ENCODE measurements at regions of chr5 and their contacts with region 1.

Region 1: GRCh38 chr5:52771343-52772039 is 16.2 kb upstream of the ITGA1 start:
- DNase-seq: peak; percentile 85
- H3K4me3 Mint-ChIP-seq: peak overlapping the region; percentile 62
- H3K27ac Mint-ChIP-seq: peak overlapping the region; percentile 71
- H3K4me1 Mint-ChIP-seq: peaks cover 54% of the 10 kb centered on the region
- H3K27me3 Mint-ChIP-seq: no peaks in the 10 kb centered on the region

Region 2: GRCh38 chr5:52725065-52725746 is 46.3 kb before region 1 on chr5:
- intact Hi-C with region 1: loop called (anchors 1 kb)
- DNase-seq: peak; percentile 93
- H3K4me3 Mint-ChIP-seq: peak overlapping the region; percentile 69
- H3K27ac Mint-ChIP-seq: peak overlapping the region; percentile 90
- H3K4me1 Mint-ChIP-seq: peaks cover 50% of the 10 kb centered on the region
- H3K27me3 Mint-ChIP-seq: no peaks in the 10 kb centered on the region

Region 3: GRCh38 chr5:52743970-52744369 is 27.5 kb before region 1 on chr5:
- intact Hi-C with region 1: loop called (anchors 1 kb)
- DNase-seq: peak; percentile 89
- H3K4me3 Mint-ChIP-seq: peak overlapping the region; percentile 31
- H3K27ac Mint-ChIP-seq: peak overlapping the region; percentile 76
- H3K4me1 Mint-ChIP-seq: peaks cover 49% of the 10 kb centered on the region
- H3K27me3 Mint-ChIP-seq: no peaks in the 10 kb centered on the region

Region 4: GRCh38 chr5:52760695-52761366 is 10.7 kb before region 1 on chr5:
- intact Hi-C with region 1: loop called (anchors 1 kb)
- DNase-seq: no peak
- H3K4me3 Mint-ChIP-seq: no peak overlapping the region
- H3K27ac Mint-ChIP-seq: no peak overlapping the region
- H3K4me1 Mint-ChIP-seq: peaks cover 12% of the 10 kb centered on the region
- H3K27me3 Mint-ChIP-seq: no peaks in the 10 kb centered on the region

Region 5: DNA sequence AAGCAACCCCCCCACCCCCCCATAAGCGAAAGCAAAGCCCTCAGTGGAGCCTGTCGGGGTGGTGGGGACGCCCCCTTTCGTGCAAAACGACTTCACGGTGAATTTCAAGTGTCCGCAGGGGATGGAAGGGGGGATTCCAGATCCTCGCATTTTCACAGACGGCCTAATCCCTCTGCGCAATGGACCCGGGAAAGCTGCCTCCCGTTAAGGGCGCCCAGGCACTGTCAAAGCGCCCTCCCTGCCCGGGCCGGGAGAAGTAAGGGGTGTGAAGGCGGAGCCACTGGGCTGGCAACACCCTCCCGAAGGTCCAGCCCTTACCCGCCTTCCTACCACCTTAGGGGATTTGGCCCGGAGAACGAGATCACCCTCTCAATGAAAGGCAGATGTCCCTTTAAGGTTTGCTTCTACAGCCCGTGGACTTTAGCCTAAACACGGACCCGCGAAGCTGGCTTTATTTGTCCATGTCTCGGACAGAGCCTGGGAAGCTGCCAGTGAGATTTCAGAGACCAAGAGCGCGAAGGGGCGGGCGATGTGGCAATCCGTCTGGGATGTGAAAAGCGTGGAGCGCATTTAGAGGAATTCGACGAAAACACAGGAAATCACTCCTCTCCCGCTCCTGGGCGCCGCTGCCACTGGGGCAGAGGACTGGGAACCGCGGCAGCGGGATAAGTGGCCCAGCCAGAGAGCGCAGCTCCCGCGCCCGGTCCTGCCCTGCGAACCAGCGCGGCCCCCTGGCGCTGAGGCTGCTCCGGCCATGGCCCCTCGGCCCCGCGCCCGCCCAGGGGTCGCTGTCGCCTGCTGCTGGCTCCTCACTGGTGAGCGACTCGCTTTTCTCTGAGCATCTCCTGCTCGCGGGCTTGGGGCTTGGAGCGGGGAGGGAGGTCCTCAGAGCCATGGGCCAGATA is 16.4 kb after region 1 on chr5 and contains the starts of genes ITGA1 and PELO:
- intact Hi-C with region 1: loop called (anchors 1 kb)
- DNase-seq: peak; percentile 85
- H3K4me3 Mint-ChIP-seq: peak within 1 kb of the TSS; percentile 91
- H3K27ac Mint-ChIP-seq: peak within 1 kb of the TSS; percentile 73
- H3K4me1 Mint-ChIP-seq: peaks cover 30% of the 10 kb centered on the region
- H3K27me3 Mint-ChIP-seq: peaks cover 30% of the 10 kb centered on the region
- total RNA-seq, gene ITGA1: 1.6 and 2.2 TPM in 2 replicates
- total RNA-seq, gene PELO: 20.0 and 21.2 TPM in 2 replicates

Region 6: DNA sequence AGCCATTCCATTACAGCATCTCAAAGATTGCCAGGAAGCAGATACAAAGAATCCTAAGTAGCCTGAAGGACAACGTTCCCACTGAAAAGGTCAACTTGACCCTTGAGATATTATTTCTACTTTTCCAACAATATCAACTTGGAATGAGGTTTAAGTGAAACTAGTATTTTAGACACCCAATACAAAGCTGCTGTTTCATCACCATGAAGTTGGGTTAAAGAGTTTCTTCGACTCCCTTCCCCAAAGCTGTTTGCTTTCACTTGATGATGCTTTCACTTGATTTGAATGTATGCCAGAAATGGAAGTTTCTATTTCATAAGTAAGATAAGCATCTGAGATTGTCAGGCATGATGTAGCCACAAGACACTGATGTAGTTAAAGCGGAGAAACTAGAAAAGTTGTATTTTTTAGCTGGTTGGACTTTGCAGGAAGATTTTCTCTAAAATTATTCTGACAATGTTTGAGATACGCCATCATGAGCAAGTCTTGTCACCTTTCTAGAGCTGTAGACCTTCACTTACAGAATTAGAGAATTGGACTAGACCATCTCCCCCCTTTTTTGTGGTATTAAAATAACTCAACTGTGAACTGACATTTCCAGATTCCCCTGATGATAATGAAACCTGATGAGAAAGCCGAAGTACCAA is 318.0 kb after region 1 on chr5:
- intact Hi-C with region 1: loop called (anchors 10 kb)
- DNase-seq: peak; percentile 77
- H3K4me3 Mint-ChIP-seq: peak overlapping the region; percentile 45
- H3K27ac Mint-ChIP-seq: peak overlapping the region; percentile 42
- H3K4me1 Mint-ChIP-seq: peaks cover 38% of the 10 kb centered on the region
- H3K27me3 Mint-ChIP-seq: no peaks in the 10 kb centered on the region

Measured in activated CD4-positive, alpha-beta T cell treated with anti-CD3 and anti-CD28 coated beads, Interleukin-2, amount 10 ng/mL, durations not matched to agents 24 days and 14 days (primary cell).